ENCODE measurements at regions of chr5 and their contacts with region 1.

Region 1: GRCh38 chr5:140564196-140565023 is at the starts of genes APBB3 and SLC35A4:
- DNase-seq: peak; percentile 97
- ATAC-seq: peak; percentile 95
- H3K4me3 Mint-ChIP-seq: peak within 1 kb of the TSS; percentile 88
- H3K27ac Mint-ChIP-seq: peak within 1 kb of the TSS; percentile 90
- H3K4me1 Mint-ChIP-seq: peaks cover 54% of the 10 kb centered on the region
- H3K27me3 Mint-ChIP-seq: no peaks in the 10 kb centered on the region
- CTCF ChIP-seq: no peak
- total RNA-seq, gene APBB3: 24.9 TPM
- total RNA-seq, gene SLC35A4: 72.9 to 73.6 TPM

Region 2: DNA sequence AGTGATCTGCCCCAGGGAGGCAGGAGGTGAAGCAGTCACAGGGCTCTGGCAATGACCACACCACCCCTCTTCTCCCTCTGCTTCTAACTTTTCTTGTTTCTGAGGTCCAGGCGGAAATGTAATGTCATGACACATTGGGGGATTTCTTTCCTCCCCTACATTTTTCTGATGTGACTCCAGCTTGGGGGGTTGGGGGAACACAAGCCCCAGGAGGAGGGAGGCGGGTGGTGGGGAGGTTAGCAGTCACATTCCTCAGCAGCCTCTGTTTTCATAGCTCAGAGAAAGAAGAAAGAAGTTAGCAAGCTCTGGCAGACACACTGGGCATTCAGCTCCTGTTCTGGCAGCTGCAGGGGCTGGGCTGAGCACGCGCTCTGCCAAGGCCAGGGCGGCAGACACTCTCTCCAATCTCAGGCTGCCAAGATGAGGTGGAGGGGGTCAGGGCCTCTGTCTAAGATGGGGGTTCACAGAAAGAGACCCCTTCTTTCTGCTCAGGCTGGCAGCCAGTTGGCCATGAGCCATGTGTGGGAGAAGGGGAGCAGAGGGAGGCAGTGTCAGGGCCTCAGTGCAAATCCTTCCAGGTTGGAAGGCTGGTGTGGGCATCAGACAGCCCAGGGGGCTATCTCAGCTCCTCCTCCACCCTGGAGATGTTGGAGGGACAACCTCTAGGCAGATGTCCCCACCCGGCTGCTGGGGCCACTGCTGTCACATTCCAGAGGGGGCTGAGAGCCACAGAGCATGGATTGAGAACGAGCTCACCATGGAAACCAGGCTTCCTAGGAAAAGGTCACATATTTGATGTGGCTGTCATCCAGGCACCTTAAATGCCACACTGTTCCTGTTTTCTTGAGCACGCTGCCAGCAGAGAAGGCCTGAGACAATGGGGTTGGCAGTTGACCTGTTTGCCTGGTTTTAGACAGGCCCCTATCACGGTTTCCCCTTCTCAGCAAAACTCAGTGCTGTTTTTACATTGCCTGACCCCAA is 241.4 kb before region 1 on chr5:
- CTCF ChIA-PET with region 1: no interaction called
- POLR2A ChIA-PET with region 1: no interaction called
- intact Hi-C with region 1: no loop called
- DNase-seq: no peak
- ATAC-seq: no peak
- H3K4me3 Mint-ChIP-seq: no peak overlapping the region
- H3K27ac Mint-ChIP-seq: no peak overlapping the region
- H3K4me1 Mint-ChIP-seq: peaks cover 7% of the 10 kb centered on the region
- H3K27me3 Mint-ChIP-seq: no peaks in the 10 kb centered on the region
- CTCF ChIP-seq: no peak

Region 3: GRCh38 chr5:140497897-140498296 is 66.5 kb before region 1 on chr5:
- CTCF ChIA-PET with region 1: no interaction called
- POLR2A ChIA-PET with region 1: no interaction called
- intact Hi-C with region 1: no loop called
- DNase-seq: no peak
- ATAC-seq: no peak
- H3K4me3 Mint-ChIP-seq: no peak overlapping the region
- H3K27ac Mint-ChIP-seq: no peak overlapping the region
- H3K4me1 Mint-ChIP-seq: peaks cover 8% of the 10 kb centered on the region
- H3K27me3 Mint-ChIP-seq: no peaks in the 10 kb centered on the region
- CTCF ChIP-seq: no peak

Region 4: DNA sequence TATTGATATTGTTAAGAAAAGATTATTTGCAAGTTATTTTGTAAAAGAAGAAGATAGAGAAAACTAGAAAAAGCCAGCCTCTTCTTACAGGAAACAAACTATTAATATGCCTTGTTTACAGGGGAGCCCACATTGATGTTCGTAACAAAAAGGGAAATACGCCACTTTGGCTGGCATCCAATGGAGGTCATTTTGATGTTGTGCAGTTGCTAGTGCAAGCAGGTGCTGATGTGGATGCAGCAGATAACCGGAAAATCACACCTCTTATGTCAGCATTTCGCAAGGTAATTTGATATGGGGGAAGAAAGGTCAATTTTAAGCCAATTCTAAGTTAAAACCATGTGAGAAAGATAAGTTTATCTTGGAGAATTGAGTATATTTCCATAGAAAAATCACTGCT is 54.5 kb before region 1 on chr5:
- CTCF ChIA-PET with region 1: no interaction called
- POLR2A ChIA-PET with region 1: no interaction called
- intact Hi-C with region 1: no loop called
- DNase-seq: no peak
- ATAC-seq: no peak
- H3K4me3 Mint-ChIP-seq: no peak overlapping the region
- H3K27ac Mint-ChIP-seq: no peak overlapping the region
- H3K4me1 Mint-ChIP-seq: no peaks in the 10 kb centered on the region
- H3K27me3 Mint-ChIP-seq: no peaks in the 10 kb centered on the region
- CTCF ChIP-seq: no peak

Region 5: GRCh38 chr5:140700177-140701144 is 136.1 kb after region 1 on chr5 and contains the start of gene ZMAT2:
- CTCF ChIA-PET with region 1: no interaction called
- POLR2A ChIA-PET with region 1: no interaction called
- intact Hi-C with region 1: loop called (anchors 10 kb)
- DNase-seq: peak; percentile 98
- ATAC-seq: peak; percentile 100
- H3K4me3 Mint-ChIP-seq: peak within 1 kb of the TSS; percentile 92
- H3K27ac Mint-ChIP-seq: peak within 1 kb of the TSS; percentile 94
- H3K4me1 Mint-ChIP-seq: peaks cover 16% of the 10 kb centered on the region
- H3K27me3 Mint-ChIP-seq: no peaks in the 10 kb centered on the region
- CTCF ChIP-seq: no peak
- total RNA-seq, gene ZMAT2: 47.6 to 50.1 TPM